Left ventricle myocardium inferior (tissue), 1 donor: ENCODE measurements at regions of chr4 and their contacts with region 1.

Region 1: DNA sequence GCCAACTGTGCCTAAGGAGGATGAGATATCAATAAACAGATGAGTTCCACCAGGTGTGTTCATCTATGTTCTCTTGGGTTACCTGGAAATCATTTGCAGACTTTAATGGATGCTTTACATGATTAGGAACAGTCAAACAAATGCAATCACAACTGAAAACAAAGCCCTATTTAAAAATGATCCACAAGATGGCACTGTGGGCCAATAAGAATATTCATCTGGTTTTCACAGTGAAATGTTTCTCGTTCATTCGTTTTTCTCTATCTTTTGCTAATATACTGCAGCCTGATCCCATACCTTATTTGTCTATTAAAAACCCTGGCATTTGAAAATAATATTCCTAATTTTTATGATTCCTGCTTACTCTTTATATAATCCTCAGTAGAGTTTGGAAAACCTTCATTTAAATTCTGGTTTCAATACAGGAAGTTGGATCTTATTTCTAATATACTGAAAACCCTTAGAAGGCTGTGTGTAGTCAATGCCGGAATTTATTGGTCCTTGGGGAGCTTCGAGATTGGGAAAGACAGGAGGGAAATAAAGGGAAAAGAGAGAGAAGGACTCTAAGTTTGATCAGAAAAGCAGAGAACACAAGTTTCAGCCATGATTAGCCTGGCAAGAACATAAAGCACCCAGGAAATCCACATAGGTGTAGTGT is 63.8 kb upstream of the TAPT1 start:
- DNase-seq: no peak
- H3K4me3 ChIP-seq: peak overlapping the region; percentile 27
- H3K27ac ChIP-seq: no peak overlapping the region
- H3K4me1 ChIP-seq: peaks cover 9% of the 10 kb centered on the region
- H3K27me3 ChIP-seq: peaks cover 16% of the 10 kb centered on the region
- CTCF ChIP-seq: peak; percentile 78

Region 2: DNA sequence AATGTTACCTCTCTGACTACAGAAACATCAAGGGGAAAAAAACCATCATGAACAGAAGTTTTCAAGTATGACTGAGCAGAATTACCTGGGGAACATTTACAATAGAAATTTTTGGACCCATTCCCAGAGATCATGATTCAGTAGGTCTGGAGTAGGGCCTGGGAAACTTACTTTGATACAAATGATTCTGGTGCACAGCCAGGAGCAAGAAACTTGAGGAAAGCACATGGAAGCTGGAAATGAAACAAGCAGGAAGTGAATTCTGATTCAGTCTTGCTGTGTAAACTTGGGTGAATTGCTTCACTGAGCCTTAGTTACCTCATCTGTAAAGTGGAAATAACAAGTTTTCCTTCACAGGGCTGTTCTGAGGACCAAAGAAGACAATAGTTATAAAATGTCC is 128.8 kb after region 1 on chr4:
- intact Hi-C with region 1: no loop called
- DNase-seq: no peak
- H3K4me3 ChIP-seq: no peak overlapping the region
- H3K27ac ChIP-seq: peak overlapping the region; percentile 2
- H3K4me1 ChIP-seq: no peaks in the 10 kb centered on the region
- H3K27me3 ChIP-seq: no peaks in the 10 kb centered on the region
- CTCF ChIP-seq: no peak

Region 3: GRCh38 chr4:16438986-16439385 is 149.0 kb after region 1 on chr4:
- intact Hi-C with region 1: loop called (anchors 5 kb)
- DNase-seq: no peak
- H3K4me3 ChIP-seq: no peak overlapping the region
- H3K27ac ChIP-seq: peak overlapping the region; percentile 57
- H3K4me1 ChIP-seq: no peaks in the 10 kb centered on the region
- H3K27me3 ChIP-seq: no peaks in the 10 kb centered on the region
- CTCF ChIP-seq: no peak

Region 4: GRCh38 chr4:16524911-16525554 is 235.0 kb after region 1 on chr4:
- intact Hi-C with region 1: no loop called
- DNase-seq: no peak
- H3K4me3 ChIP-seq: no peak overlapping the region
- H3K27ac ChIP-seq: no peak overlapping the region
- H3K4me1 ChIP-seq: peaks cover 19% of the 10 kb centered on the region
- H3K27me3 ChIP-seq: no peaks in the 10 kb centered on the region
- CTCF ChIP-seq: no peak